Sigmoid colon (tissue), 7 donors: ENCODE measurements at regions of chr2 and their contacts with region 1.

Region 1: DNA sequence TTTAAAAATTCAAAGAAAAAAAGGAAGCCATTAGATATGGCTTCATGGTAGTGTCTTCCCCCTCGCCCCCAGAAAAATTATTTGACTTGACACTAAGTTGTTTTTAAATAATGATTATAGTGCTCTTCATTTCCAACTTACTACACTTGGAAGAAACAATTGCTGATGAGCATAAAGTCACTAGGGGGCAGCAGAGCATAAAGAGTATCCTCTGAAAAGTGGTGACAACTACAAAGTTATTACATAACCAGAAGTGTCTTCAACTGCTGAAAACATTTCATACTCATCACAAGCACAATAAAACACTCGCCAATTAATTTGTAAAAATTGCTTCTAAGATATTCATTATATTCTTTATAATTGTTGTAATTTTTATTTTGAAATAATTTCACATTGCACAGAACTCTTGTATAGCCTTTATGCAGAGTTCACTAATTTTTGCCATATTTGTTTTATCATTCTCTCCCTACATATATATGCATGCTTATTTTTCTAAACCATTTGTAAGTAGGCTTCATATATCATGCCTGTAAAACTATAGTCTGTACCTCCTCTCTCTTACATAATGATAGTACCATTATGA is 54.9 kb downstream of the EXOC6B start:
- DNase-seq: peak; percentile 72
- H3K4me3 ChIP-seq: no peak overlapping the region
- H3K27ac ChIP-seq: no peak overlapping the region
- H3K4me1 ChIP-seq: no peaks in the 10 kb centered on the region
- H3K27me3 ChIP-seq: no peaks in the 10 kb centered on the region
- CTCF ChIP-seq: peak; percentile 64 to 85 (median 70)
- EP300 ChIP-seq: no peak
- POLR2A ChIP-seq: no peak

Region 2: DNA sequence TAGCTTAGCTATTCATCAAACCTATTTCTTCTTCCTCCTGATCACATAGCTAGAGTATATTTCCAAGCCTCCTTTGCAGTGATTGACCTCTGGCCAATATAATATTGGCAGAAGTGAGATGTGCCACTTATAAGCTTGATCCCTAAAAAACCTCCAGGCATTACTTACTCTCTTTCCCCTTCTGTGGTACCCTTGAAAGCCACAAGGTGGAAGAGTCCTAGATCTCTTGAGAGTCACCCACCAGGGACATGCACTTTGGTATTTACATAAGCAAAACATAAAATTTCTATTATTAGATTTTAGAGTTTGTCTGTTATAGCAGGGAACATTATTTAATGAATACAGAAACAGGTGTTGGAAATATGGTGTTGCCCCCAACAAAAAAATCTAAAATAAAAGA is 57.1 kb before region 1 on chr2:
- intact Hi-C with region 1: no loop called
- DNase-seq: no peak
- H3K4me3 ChIP-seq: no peak overlapping the region
- H3K27ac ChIP-seq: no peak overlapping the region
- H3K4me1 ChIP-seq: no peaks in the 10 kb centered on the region
- H3K27me3 ChIP-seq: no peaks in the 10 kb centered on the region
- CTCF ChIP-seq: no peak
- EP300 ChIP-seq: no peak
- POLR2A ChIP-seq: no peak

Region 3: GRCh38 chr2:72815655-72816268 is 44.8 kb after region 1 on chr2:
- intact Hi-C with region 1: loop called (anchors 5 kb)
- DNase-seq: no peak
- H3K4me3 ChIP-seq: no peak overlapping the region
- H3K27ac ChIP-seq: no peak overlapping the region
- H3K4me1 ChIP-seq: no peaks in the 10 kb centered on the region
- H3K27me3 ChIP-seq: no peaks in the 10 kb centered on the region
- CTCF ChIP-seq: no peak
- EP300 ChIP-seq: no peak
- POLR2A ChIP-seq: no peak

Region 4: GRCh38 chr2:72862239-72862988 is 91.4 kb after region 1 on chr2:
- intact Hi-C with region 1: loop called (anchors 1 kb)
- DNase-seq: peak; percentile 93
- H3K4me3 ChIP-seq: peak overlapping the region in 2 of 4 donors; percentile 9 to 19
- H3K27ac ChIP-seq: no peak overlapping the region
- H3K4me1 ChIP-seq: peaks cover 0 to 10% (median 9%) of the 10 kb centered on the region in 4 donors
- H3K27me3 ChIP-seq: peaks cover 0 to 21% (median 3%) of the 10 kb centered on the region in 3 donors
- CTCF ChIP-seq: peak; percentile 68 to 98 (median 82)
- EP300 ChIP-seq: no peak
- POLR2A ChIP-seq: no peak